ENCODE measurements at regions of chr9 and their contacts with region 1.

Region 1: DNA sequence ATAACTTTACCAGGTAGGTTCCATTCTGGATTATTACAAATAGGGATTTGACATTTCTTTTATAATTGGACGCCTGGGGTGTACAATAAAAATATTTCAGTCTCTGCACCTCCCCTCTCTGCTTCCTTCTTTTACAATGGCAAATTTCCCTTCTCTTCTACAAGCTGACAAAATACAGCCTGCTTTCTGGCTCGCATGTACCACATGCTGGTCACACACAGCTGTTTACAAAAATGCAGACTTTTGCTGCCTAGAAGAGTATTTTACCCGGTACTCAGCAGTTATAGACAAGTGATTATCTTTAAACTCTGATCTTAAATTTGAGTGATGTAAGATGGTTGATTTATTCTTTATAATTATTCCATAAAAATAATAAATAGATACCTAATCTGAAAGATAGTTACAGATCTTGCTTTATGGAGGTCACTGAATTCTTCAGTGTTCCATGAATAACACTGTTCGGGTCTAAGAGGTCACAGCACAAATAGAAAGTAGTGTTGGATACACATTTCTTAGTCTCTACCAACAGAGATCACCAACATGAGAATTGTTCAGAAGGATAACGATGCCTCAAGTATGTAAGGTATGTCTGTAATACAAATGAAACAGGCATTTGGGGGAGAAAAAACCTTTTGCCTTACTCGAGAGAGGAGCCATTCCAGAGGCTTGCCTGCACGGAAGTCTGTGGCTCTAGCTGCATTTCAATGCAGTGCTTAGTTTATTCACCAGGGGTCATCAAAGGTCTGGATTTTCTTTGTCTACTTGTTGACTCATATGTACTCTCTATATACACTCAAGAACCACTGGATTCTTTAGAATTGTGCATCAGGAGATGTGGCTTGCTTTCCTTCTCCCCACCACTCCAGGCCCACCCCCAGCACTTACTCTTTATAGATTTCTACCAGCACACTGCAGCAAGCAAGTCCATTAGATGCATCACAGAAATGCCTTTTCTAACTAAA is 206.6 kb upstream of the RFX3 start:
- DNase-seq: peak; percentile 47
- ATAC-seq: peak; percentile 92
- H3K4me3 Mint-ChIP-seq: no peak overlapping the region
- H3K27ac Mint-ChIP-seq: no peak overlapping the region
- H3K4me1 Mint-ChIP-seq: peaks cover 31% of the 10 kb centered on the region
- H3K27me3 Mint-ChIP-seq: peaks cover 2% of the 10 kb centered on the region

Region 2: GRCh38 chr9:3467593-3468219 is 264.7 kb before region 1 on chr9:
- CTCF ChIA-PET with region 1: no interaction called
- POLR2A ChIA-PET with region 1: no interaction called
- intact Hi-C with region 1: loop called (anchors 5 kb)
- DNase-seq: peak; percentile 75
- ATAC-seq: peak; percentile 99
- H3K4me3 Mint-ChIP-seq: no peak overlapping the region
- H3K27ac Mint-ChIP-seq: no peak overlapping the region
- H3K4me1 Mint-ChIP-seq: peaks cover 11% of the 10 kb centered on the region
- H3K27me3 Mint-ChIP-seq: no peaks in the 10 kb centered on the region

Region 3: GRCh38 chr9:3541206-3541605 is 191.2 kb before region 1 on chr9:
- CTCF ChIA-PET with region 1: no interaction called
- POLR2A ChIA-PET with region 1: no interaction called
- intact Hi-C with region 1: no loop called
- DNase-seq: no peak
- ATAC-seq: no peak
- H3K4me3 Mint-ChIP-seq: no peak overlapping the region
- H3K27ac Mint-ChIP-seq: no peak overlapping the region
- H3K4me1 Mint-ChIP-seq: peaks cover 30% of the 10 kb centered on the region
- H3K27me3 Mint-ChIP-seq: no peaks in the 10 kb centered on the region

Region 4: GRCh38 chr9:4117835-4118610 is 385.7 kb after region 1 on chr9:
- CTCF ChIA-PET with region 1: interaction called, 16 read pairs
- POLR2A ChIA-PET with region 1: no interaction called
- intact Hi-C with region 1: loop called (anchors 1 kb)
- DNase-seq: peak; percentile 74
- ATAC-seq: peak; percentile 70
- H3K4me3 Mint-ChIP-seq: no peak overlapping the region
- H3K27ac Mint-ChIP-seq: no peak overlapping the region
- H3K4me1 Mint-ChIP-seq: no peaks in the 10 kb centered on the region
- H3K27me3 Mint-ChIP-seq: no peaks in the 10 kb centered on the region

Region 5: GRCh38 chr9:4228606-4229005 is 496.2 kb after region 1 on chr9:
- CTCF ChIA-PET with region 1: no interaction called
- POLR2A ChIA-PET with region 1: no interaction called
- intact Hi-C with region 1: loop called (anchors 2 to 10 kb)
- DNase-seq: no peak
- ATAC-seq: peak; percentile 60
- H3K4me3 Mint-ChIP-seq: no peak overlapping the region
- H3K27ac Mint-ChIP-seq: no peak overlapping the region
- H3K4me1 Mint-ChIP-seq: peaks cover 9% of the 10 kb centered on the region
- H3K27me3 Mint-ChIP-seq: peaks cover 3% of the 10 kb centered on the region

Region 6: GRCh38 chr9:4339357-4339756 is 607.0 kb after region 1 on chr9:
- CTCF ChIA-PET with region 1: interaction called, 13 read pairs
- POLR2A ChIA-PET with region 1: no interaction called
- intact Hi-C with region 1: loop called (anchors 1 kb)
- DNase-seq: peak; percentile 91
- ATAC-seq: peak; percentile 94
- H3K4me3 Mint-ChIP-seq: peak overlapping the region; percentile 30
- H3K27ac Mint-ChIP-seq: peak overlapping the region; percentile 65
- H3K4me1 Mint-ChIP-seq: peaks cover 15% of the 10 kb centered on the region
- H3K27me3 Mint-ChIP-seq: no peaks in the 10 kb centered on the region

Measured in activated CD4-positive, alpha-beta T cell treated with anti-CD3 and anti-CD28 coated beads for 36 hours (primary cell).